Caco-2 (cell line): ENCODE measurements at regions of chr13 and their contacts with region 1.

Region 1: GRCh38 chr13:51923983-51924539 is 62.3 kb downstream of the CCDC70 start:
- DNase-seq: peak in 1 of 2 experiments; percentile 56
- H3K4me3 ChIP-seq: no peak overlapping the region
- H3K4me3 Mint-ChIP-seq: no peak overlapping the region
- H3K27ac Mint-ChIP-seq: no peak overlapping the region
- H3K4me1 ChIP-seq: no peaks in the 10 kb centered on the region
- H3K4me1 Mint-ChIP-seq: no peaks in the 10 kb centered on the region
- H3K27me3 ChIP-seq: no peaks in the 10 kb centered on the region
- H3K27me3 Mint-ChIP-seq: no peaks in the 10 kb centered on the region
- CTCF ChIP-seq: peak; percentile 54 to 55

Region 2: DNA sequence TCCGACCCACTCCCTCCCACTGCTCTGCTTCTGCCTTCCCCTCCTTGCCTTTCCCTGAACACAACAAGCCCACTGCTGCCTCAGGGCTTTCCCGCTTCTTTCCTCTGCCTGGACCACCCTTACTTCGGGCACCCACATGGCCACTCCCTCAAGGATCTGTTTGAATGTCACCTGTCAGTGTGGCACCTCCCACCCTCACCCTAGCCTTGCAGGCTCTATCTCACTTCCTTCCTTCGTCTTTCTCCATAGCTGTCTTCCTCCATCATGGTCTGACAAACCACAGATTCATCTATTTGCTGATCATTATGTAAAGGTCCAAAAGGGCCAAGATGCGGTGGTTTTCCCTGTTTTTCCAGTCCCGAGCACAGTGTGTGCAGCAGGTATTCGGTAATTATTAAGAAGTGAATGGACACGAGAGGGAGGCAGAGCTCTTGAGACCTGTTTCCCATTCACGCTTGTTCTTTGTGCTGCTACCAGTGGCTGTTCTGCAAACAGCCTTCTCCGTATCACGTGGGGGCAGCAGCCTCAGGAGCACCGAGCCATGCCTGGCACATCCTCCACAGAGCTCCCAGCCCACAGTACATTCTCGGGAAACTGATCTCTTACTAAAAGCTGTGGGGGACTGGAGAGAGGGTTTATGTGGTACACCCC is 12.1 kb before region 1 on chr13:
- CTCF ChIA-PET with region 1: interaction called, 16 read pairs
- POLR2A ChIA-PET with region 1: no interaction called
- intact Hi-C with region 1: loop called (anchors 1 kb)
- DNase-seq: peak; percentile 69 to 75
- H3K4me3 ChIP-seq: no peak overlapping the region
- H3K4me3 Mint-ChIP-seq: peak overlapping the region; percentile 13
- H3K27ac Mint-ChIP-seq: peak overlapping the region; percentile 21
- H3K4me1 ChIP-seq: peaks cover 18% of the 10 kb centered on the region
- H3K4me1 Mint-ChIP-seq: peaks cover 13% of the 10 kb centered on the region
- H3K27me3 ChIP-seq: no peaks in the 10 kb centered on the region
- H3K27me3 Mint-ChIP-seq: no peaks in the 10 kb centered on the region
- CTCF ChIP-seq: peak in 1 of 2 experiments; percentile 50

Region 3: DNA sequence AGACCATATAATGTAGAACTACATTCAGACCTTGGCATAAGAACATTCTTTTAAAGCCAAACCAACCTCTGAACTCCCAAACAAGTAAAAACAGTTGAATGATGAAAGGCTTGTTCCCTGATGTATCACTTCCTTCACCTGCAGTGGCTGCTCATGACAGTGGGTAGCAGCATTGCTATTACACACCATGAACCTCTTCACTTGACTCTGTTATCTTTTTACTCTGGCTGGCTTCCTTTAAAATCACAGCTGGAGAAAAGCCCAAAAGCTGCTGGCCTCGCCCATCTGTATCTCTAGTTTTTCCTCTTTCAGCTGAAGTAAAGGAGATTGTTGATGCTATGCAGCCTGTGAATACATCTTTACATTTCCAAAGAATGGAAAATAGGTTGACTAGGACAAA is 459.3 kb after region 1 on chr13:
- CTCF ChIA-PET with region 1: no interaction called
- POLR2A ChIA-PET with region 1: no interaction called
- intact Hi-C with region 1: no loop called
- DNase-seq: no peak
- H3K4me3 ChIP-seq: no peak overlapping the region
- H3K4me3 Mint-ChIP-seq: no peak overlapping the region
- H3K27ac Mint-ChIP-seq: no peak overlapping the region
- H3K4me1 ChIP-seq: no peaks in the 10 kb centered on the region
- H3K4me1 Mint-ChIP-seq: no peaks in the 10 kb centered on the region
- H3K27me3 ChIP-seq: no peaks in the 10 kb centered on the region
- H3K27me3 Mint-ChIP-seq: no peaks in the 10 kb centered on the region
- CTCF ChIP-seq: no peak